Mammary epithelial cell (primary cell): ENCODE measurements at regions of chr11 and their contacts with region 1.

Region 1: GRCh38 chr11:68436985-68437926 is 23.3 kb upstream of the PPP6R3 start:
- DNase-seq: peak; percentile 75
- H3K4me3 ChIP-seq: no peak overlapping the region
- H3K27ac ChIP-seq: no peak overlapping the region
- H3K4me1 ChIP-seq: peaks cover 22% of the 10 kb centered on the region
- H3K27me3 ChIP-seq: no peaks in the 10 kb centered on the region
- CTCF ChIP-seq: peak in 1 of 2 donors; percentile 15

Region 2: DNA sequence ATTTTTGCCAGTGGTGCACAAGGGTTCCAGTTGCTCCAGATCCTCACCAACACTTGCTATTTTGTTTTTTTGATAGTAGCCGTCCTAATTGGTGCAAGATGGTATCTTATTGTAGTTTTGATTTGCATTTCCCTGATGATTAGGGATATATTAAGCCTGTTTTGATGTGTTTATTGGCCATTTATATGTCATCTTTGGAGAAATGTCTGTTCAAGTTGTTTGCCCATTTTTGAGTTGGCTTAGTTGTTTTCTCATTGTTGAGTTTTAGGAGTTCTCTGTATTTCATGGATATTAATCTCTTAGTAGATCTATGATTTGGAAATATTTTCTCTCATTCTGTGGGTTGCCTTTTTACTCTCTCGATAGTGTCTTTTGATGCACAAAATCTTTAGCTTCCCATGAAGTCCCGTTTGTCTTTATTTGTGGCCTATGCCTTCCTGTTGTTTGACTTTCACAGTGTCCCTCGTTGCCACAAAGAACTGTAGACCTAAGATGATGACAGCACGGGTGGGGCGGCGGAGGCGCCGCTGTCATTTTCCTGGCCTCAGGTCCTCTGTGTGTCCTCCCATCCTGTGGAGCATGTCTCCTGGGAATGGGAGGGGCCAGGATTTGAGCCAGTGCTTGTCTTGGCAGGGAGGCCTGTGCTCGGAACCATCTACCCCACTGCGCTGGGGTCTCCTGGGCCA is 91.3 kb before region 1 on chr11:
- CTCF ChIA-PET with region 1: no interaction called
- dilution Hi-C with region 1: loop called (anchors 5 kb)
- in situ Hi-C with region 1: no loop called
- intact Hi-C with region 1: no loop called
- DNase-seq: no peak
- H3K4me3 ChIP-seq: no peak overlapping the region
- H3K27ac ChIP-seq: no peak overlapping the region
- H3K4me1 ChIP-seq: peaks cover 43% of the 10 kb centered on the region
- H3K27me3 ChIP-seq: no peaks in the 10 kb centered on the region
- CTCF ChIP-seq: no peak

Region 3: GRCh38 chr11:68402355-68403031 is 34.8 kb before region 1 on chr11:
- CTCF ChIA-PET with region 1: no interaction called
- dilution Hi-C with region 1: loop called (anchors 5 kb)
- in situ Hi-C with region 1: no loop called
- intact Hi-C with region 1: no loop called
- DNase-seq: no peak
- H3K4me3 ChIP-seq: no peak overlapping the region
- H3K27ac ChIP-seq: no peak overlapping the region
- H3K4me1 ChIP-seq: no peaks in the 10 kb centered on the region
- H3K27me3 ChIP-seq: no peaks in the 10 kb centered on the region
- CTCF ChIP-seq: no peak

Region 4: DNA sequence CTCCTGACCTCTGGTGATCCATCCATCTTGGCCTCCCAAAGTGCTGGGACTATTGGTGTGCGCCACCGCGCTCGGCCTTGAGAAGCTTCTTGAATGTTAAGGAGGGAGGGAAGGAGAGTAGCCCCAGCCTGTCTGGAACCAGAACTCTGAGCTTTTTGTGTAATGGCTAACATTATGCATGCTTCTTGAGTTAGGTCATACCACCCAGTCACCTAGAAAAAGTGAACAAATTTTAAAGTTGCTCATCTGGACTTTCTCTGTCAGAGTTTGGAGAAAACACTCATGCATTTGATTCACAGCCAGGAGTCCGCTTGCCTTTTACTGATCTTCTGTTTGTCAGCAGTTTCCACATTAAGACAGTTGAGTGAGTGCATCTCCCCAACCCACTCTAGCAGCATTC is 105.4 kb after region 1 on chr11:
- CTCF ChIA-PET with region 1: no interaction called
- dilution Hi-C with region 1: no loop called
- in situ Hi-C with region 1: no loop called
- intact Hi-C with region 1: no loop called
- DNase-seq: peak; percentile 66
- H3K4me3 ChIP-seq: no peak overlapping the region
- H3K27ac ChIP-seq: no peak overlapping the region
- H3K4me1 ChIP-seq: peaks cover 16% of the 10 kb centered on the region
- H3K27me3 ChIP-seq: no peaks in the 10 kb centered on the region
- CTCF ChIP-seq: no peak